Right cardiac atrium (tissue), 5 donors: ENCODE measurements at regions of chr11 and their contacts with region 1.

Region 1: DNA sequence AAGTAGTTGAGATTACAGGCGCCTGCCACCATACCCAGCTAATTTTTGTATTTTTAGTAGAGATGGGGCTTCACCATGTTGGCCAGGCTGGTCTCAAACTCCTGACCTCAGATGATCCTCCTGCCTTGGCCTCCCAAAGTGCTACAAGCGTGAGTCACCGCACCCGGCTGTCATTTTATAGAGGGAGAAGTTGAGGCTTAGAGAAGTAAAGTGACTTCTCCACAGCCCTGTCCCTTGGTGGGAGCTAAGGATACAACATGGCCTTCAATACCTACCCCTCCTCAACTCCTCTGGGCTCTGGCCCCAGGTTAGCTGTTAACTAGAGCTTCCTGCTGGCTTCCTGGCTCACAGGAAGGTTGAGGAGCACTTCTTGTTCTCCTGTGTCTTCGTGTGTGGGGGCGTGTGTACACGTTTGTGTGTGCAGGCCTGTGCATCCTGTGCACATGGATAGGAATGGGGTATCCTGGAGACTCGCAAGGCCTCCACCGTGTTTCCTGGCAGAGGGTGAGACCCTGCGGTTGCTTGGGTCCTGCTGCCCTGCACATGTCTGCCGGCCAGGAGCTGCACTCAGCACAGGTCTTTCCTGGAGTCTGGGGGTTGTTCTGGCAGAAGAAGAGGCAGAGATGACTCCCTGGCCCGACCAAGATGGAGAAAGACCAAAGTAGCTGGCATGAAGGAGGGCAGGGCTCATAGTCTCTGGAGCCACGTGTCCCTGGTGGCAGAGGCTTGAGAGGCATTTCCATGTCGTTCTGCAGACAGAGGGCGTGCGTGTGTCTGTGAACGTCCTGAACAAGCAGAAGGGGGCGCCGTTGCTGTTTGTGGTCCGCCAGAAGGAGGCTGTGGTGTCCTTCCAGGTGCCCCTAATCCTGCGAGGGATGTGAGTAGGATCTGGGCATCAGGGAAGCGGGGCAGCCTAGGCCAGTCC is 2.4 kb downstream of the SIDT2 start:
- DNase-seq: peak; percentile 74 to 91 (median 87)
- ATAC-seq: peak; percentile 11
- H3K4me3 ChIP-seq: no peak overlapping the region
- H3K27ac ChIP-seq: no peak overlapping the region
- H3K4me1 ChIP-seq: peaks cover 17% of the 10 kb centered on the region
- H3K27me3 ChIP-seq: no peaks in the 10 kb centered on the region

Region 2: DNA sequence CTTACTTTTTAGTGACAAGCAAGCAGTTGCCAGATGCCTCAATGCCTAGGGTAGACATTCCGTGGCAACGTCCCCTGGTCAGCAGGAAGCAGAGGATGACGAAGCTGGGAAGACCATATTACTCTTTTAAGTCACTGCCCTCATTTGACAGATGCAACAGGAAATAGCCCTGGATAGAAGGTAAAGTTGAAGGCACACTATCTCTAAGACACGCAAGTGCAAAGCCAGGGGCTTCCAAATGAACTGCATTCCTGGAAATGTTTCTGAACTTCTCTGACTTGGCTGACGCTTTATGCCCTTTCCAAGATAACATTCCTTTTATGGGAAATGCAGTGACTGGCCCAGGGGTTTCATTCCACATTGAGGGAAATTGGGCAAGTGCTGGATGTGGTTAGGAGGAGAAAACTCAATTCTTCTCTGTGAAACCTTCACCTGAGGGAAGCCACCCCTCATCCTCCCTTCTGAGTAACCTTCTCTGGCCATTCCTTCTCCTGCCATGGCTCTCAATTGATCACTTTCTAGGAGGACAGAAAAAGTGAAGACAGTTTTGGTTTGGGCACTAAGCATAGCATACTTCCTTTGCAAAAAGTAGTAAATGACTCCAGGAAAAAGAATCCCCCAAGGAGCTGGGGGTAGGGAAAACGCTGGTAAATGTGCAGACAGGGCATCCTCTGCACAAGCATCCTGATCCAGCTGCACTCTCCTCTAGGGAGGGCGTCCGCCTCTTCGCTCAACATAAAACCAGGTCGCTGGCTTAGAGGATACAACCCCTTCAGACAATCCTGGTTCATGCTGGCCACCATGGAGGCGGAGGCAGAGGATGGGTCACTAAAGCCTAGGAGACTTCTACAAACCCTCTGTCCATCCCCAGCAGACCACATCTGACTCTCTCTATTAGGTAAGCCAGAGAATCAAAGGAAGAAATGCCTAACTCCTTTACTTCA is 36.5 kb after region 1 on chr11:
- intact Hi-C with region 1: loop called in 2 of 4 experiments (anchors 5 kb)
- DNase-seq: peak; percentile 58 to 68 (median 62)
- ATAC-seq: peak; percentile 9 to 48
- H3K4me3 ChIP-seq: no peak overlapping the region
- H3K27ac ChIP-seq: peak overlapping the region; percentile 85
- H3K4me1 ChIP-seq: peaks cover 34% of the 10 kb centered on the region
- H3K27me3 ChIP-seq: no peaks in the 10 kb centered on the region

Region 3: DNA sequence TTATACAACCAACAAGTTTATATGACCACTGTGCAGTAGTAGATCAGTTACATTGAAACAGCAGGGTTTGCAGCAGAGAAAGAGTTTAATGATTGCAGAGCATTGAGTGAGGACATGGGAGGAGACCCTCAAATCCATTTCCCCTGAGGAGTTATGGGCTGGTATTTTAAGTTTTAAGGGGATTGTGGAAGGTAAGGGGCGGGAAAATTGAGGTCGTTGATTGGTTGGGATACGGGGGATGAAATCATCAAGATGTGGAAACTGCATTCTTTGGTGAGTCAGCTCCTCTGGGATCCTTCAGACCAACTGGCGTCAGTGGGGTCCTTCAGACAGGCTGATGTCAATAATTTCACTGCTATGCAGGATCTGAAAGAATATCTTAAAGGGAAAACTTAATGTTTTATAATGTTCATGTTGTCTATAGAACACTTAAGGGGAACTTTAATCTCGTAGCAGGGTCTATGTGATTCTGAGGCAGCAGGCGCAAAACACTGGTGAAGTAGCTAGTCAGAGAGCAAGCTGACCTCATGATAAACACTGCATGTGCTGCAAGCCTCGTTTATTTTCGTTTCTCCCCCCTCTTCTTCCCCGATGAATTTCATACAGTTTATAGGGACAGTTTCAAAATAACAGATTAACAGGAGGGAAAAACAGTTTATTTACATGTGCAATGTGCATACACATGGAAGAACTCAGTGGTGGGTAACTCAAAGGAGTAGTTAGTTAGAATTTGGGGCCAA is 92.8 kb after region 1 on chr11:
- intact Hi-C with region 1: no loop called
- DNase-seq: no peak
- ATAC-seq: no peak
- H3K4me3 ChIP-seq: no peak overlapping the region
- H3K27ac ChIP-seq: no peak overlapping the region
- H3K4me1 ChIP-seq: no peaks in the 10 kb centered on the region
- H3K27me3 ChIP-seq: no peaks in the 10 kb centered on the region

Region 4: DNA sequence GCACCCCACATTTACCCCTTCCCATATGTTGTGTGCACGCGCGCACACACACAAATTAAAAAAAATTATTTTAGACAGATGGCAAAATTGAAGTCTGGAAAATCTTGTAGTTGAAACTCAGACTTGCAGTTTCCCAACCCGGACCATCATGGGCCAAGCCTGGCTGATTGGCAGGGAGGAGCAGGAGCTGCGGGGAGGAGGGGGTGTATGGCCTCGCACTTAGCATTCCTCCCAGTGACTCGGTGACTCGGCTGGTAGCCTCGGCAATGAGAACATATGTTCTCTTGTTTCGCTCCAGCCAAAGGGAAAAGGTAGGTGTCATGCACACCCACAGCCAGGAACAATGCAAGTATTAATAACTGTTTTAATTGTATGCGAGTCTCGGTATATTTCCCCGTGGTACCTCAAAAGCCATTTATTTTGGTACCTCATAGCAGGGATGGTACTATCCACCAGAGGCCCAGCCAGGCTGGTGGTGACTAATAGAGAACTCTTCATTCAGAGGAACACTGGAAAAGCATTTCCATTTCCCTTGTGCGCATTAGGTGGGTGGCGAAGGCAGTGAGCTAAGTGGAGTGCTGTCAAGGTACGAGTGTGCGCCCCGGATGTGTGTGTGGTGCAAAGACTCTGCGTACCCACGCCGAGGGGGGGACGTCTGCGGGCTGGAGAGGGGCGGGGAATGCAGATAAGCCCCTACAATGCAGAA is 523.6 kb after region 1 on chr11:
- intact Hi-C with region 1: no loop called
- DNase-seq: no peak
- ATAC-seq: peak in 1 of 2 donors; percentile 56
- H3K4me3 ChIP-seq: no peak overlapping the region
- H3K27ac ChIP-seq: peak overlapping the region; percentile 15
- H3K4me1 ChIP-seq: peaks cover 3% of the 10 kb centered on the region
- H3K27me3 ChIP-seq: no peaks in the 10 kb centered on the region